ENCODE measurements at regions of chr1 and their contacts with region 1.

Region 1: DNA sequence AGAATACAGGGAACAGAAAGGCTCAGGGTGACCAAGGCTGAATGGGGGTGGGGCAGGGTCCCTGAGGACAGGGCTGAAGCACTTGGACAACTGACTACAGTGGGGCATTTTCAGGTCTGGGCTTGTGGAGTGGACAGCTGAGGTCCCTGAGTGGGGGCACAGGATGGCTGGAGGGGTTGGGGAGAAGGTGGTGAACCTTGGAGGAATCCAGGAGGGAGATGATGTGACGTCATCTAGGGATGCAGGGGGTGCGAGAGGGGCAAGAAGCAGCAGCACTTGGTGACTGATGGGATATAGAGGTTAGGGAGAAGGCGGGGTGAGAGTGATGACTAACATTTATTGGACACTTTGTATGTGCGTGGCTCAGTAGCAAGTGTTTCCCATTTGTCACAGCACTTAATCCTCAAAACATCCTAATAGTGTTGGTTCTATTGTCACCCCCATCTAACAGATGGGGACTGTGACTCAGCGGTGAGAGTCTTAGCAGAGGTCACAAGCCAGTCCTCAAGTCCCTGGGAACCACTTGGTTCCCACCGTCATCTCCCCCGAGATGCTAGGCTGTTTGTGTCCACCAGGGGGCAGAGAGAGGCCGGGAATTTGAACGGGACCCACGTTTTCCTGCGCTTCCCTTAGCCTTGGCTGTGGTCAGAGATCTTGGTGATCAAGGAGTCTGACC is 27.9 kb upstream of the BMP8B start:
- DNase-seq: peak; percentile 82
- H3K4me3 ChIP-seq: no peak overlapping the region
- H3K27ac ChIP-seq: no peak overlapping the region
- H3K4me1 ChIP-seq: no peaks in the 10 kb centered on the region
- H3K27me3 ChIP-seq: no peaks in the 10 kb centered on the region
- CTCF ChIP-seq: peak; percentile 85 to 97 (median 96)
- POLR2A ChIP-seq: no peak

Region 2: DNA sequence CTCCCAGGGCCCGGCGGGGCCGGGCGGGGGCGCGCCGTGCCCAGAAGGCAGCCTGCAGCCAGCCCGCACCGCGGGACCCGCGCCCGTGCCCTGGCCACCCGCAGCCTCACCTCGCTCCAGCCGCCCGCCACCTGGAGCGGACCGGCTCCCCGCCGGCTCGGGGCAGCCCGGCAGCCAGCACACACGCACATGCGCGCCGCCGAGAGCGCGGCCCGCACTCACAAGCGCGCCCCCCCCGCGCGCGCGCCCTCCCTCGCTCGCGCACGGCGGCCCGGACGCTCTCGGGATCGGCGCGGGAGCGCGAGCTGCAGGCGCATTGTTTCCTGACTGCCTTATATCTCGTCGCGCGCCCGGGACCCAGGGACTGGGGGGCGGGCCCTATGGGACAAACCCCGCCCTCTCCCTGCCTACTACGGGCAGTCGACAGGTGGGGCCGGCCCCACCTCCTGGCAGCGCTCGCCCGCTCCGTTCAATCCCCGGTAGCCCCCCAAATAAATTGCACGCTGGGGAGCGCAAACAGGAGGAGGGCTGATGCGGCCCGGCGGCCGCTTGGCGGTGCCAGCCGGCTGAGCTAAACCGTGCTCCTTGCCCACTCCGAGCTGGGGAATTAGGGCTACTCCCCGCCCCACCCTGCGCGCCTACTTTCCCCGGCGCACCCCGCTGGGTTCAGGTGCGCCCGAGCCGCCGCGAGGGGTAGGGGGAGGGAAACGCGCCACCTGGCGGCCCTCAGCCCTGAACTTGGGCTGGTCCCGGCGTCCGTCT is 85.3 kb after region 1 on chr1 and contains the start of gene MYCL:
- intact Hi-C with region 1: loop called (anchors 5 kb)
- DNase-seq: peak; percentile 89
- H3K4me3 ChIP-seq: peak within 1 kb of the TSS; percentile 59 to 66
- H3K27ac ChIP-seq: peak within 1 kb of the TSS in 1 of 2 donors; percentile 41
- H3K4me1 ChIP-seq: peaks cover 7% of the 10 kb centered on the region
- H3K27me3 ChIP-seq: no peaks in the 10 kb centered on the region
- CTCF ChIP-seq: peak; percentile 57 to 64 (median 57)
- POLR2A ChIP-seq: no peak
- total RNA-seq, gene MYCL: 3.3 to 4.6 TPM